ENCODE measurements at regions of chr5 and their contacts with region 1.

Region 1: GRCh38 chr5:171418316-171418981 is 998 bp upstream of the FGF18 start:
- DNase-seq: peak; percentile 82
- ATAC-seq: peak; percentile 89
- H3K4me3 ChIP-seq: peak overlapping the region; percentile 3; the same call in 1 of the 2 replicates
- H3K27ac ChIP-seq: no peak overlapping the region
- H3K4me1 ChIP-seq: peaks cover 2% of the 10 kb centered on the region; the same call in 1 of the 2 replicates
- H3K27me3 ChIP-seq: no peaks in the 10 kb centered on the region; the same call in 1 of the 2 replicates
- CTCF ChIP-seq: peak; percentile 95
- POLR2A ChIP-seq: peak; percentile 39; the same call in 1 of the 2 replicates
- RAD21 ChIP-seq: peak; percentile 95

Region 2: DNA sequence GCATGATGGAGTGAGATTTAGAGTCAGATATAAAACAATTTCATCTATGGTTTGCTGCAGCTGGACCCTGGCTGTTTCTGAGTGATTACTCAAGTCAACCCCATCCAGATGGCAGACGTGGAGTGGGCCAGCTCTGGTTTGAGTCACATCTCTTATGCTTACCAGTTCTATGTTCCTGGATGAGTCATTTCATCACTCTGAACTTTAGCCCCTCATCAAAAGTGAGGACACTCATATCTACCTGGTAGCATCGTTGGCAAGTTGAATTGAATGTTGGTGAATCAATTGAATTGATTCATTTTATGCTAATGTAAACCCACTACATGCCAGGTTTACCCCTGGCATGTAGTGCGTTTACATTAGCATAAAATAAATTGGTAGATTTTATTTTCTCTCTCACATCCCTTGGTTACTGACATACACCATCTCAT is 177.4 kb after region 1 on chr5:
- CTCF ChIA-PET with region 1: interaction called, 7 read pairs
- POLR2A ChIA-PET with region 1: no interaction called
- dilution Hi-C with region 1: no loop called
- in situ Hi-C with region 1: no loop called
- intact Hi-C with region 1: loop called (anchors 10 kb)
- DNase-seq: peak; percentile 92
- ATAC-seq: peak; percentile 41
- H3K4me3 ChIP-seq: no peak overlapping the region
- H3K27ac ChIP-seq: peak overlapping the region; percentile 87
- H3K4me1 ChIP-seq: peaks cover 8% of the 10 kb centered on the region
- H3K27me3 ChIP-seq: peaks cover 2% of the 10 kb centered on the region; the same call in 1 of the 2 replicates
- CTCF ChIP-seq: no peak
- POLR2A ChIP-seq: no peak
- RAD21 ChIP-seq: no peak

Region 3: GRCh38 chr5:171850324-171851285 is 432.2 kb after region 1 on chr5:
- CTCF ChIA-PET with region 1: interaction called, 11 read pairs
- POLR2A ChIA-PET with region 1: no interaction called
- dilution Hi-C with region 1: no loop called
- in situ Hi-C with region 1: no loop called
- intact Hi-C with region 1: loop called (anchors 1 kb)
- DNase-seq: no peak
- ATAC-seq: peak; percentile 51
- H3K4me3 ChIP-seq: no peak overlapping the region
- H3K27ac ChIP-seq: no peak overlapping the region
- H3K4me1 ChIP-seq: no peaks in the 10 kb centered on the region
- H3K27me3 ChIP-seq: no peaks in the 10 kb centered on the region
- CTCF ChIP-seq: 0 out of 2 replicates have a peak, but pooled peaks have one; percentile 16
- POLR2A ChIP-seq: no peak
- RAD21 ChIP-seq: peak; percentile 35

Region 4: GRCh38 chr5:171913987-171914273 is 495.5 kb after region 1 on chr5:
- CTCF ChIA-PET with region 1: interaction called, 13 read pairs
- POLR2A ChIA-PET with region 1: no interaction called
- dilution Hi-C with region 1: no loop called
- in situ Hi-C with region 1: loop called (anchors 5 kb)
- intact Hi-C with region 1: no loop called
- DNase-seq: peak; percentile 21
- ATAC-seq: no peak
- H3K4me3 ChIP-seq: no peak overlapping the region
- H3K27ac ChIP-seq: no peak overlapping the region
- H3K4me1 ChIP-seq: peaks cover 4% of the 10 kb centered on the region
- H3K27me3 ChIP-seq: no peaks in the 10 kb centered on the region
- CTCF ChIP-seq: no peak
- POLR2A ChIP-seq: no peak
- RAD21 ChIP-seq: no peak

Region 5: GRCh38 chr5:172044631-172045314 is 626.3 kb after region 1 on chr5:
- CTCF ChIA-PET with region 1: no interaction called
- POLR2A ChIA-PET with region 1: no interaction called
- dilution Hi-C with region 1: no loop called
- in situ Hi-C with region 1: loop called (anchors 10 kb)
- intact Hi-C with region 1: loop called (anchors 2 kb)
- DNase-seq: no peak
- ATAC-seq: no peak
- H3K4me3 ChIP-seq: no peak overlapping the region
- H3K27ac ChIP-seq: no peak overlapping the region
- H3K4me1 ChIP-seq: no peaks in the 10 kb centered on the region
- H3K27me3 ChIP-seq: no peaks in the 10 kb centered on the region
- CTCF ChIP-seq: no peak
- POLR2A ChIP-seq: no peak
- RAD21 ChIP-seq: no peak

Region 6: DNA sequence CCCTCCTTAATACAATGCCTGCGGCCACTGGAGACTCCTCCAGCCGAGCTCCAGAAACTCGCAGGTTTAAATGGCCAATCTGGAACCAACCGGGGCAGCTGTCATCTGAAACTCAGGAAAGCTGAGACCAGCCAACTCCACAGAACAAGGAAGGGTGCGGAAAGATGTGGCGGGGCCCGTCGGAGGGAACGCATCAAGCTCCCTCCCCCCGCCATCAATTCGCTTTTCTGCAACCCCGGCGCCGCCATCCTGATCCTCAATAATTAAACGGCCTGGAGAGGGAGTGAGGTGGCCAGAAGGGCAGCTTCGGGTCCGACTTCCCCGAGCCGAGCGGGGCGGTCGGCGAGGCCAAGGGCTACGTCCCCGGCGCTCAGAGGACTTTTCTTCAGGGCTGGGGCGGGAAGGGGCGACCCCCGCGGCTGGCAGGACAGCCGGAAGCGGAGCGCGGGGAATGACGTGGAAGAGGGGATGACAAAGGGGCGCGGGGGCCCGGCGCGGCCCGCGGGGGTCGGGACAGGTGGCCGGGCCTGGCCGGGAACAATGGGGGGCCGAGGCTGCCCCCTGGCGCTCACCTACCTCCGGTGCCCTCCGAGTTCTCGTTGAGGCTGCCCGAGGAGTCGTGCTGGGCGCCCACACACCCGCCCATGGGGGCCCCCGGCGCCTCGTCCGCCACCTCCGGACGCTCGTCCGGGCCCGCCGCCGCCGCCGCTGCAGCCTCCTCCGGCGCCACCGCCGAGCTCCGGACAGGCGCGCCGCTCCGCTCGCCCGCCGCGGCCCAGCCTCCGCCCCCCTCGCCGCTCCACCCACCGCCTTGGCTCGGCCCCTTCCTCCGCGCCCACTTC is 864.8 kb after region 1 on chr5 and contains the start of gene UBTD2:
- CTCF ChIA-PET with region 1: no interaction called
- POLR2A ChIA-PET with region 1: no interaction called
- dilution Hi-C with region 1: no loop called
- in situ Hi-C with region 1: loop called (anchors 25 kb)
- intact Hi-C with region 1: no loop called
- DNase-seq: peak; percentile 70
- ATAC-seq: peak; percentile 86
- H3K4me3 ChIP-seq: peak within 1 kb of the TSS; percentile 94
- H3K27ac ChIP-seq: peak within 1 kb of the TSS; percentile 99
- H3K4me1 ChIP-seq: peaks cover 3% of the 10 kb centered on the region
- H3K27me3 ChIP-seq: no peaks in the 10 kb centered on the region
- CTCF ChIP-seq: peak; percentile 45
- POLR2A ChIP-seq: 0 out of 2 replicates have a peak, but pooled peaks have one; percentile 9
- RAD21 ChIP-seq: peak; percentile 38
- total RNA-seq, gene UBTD2: 20.6 and 25.6 TPM in 2 replicates

Region 7: GRCh38 chr5:172764849-172765765 is 1346.7 kb after region 1 on chr5:
- CTCF ChIA-PET with region 1: no interaction called
- POLR2A ChIA-PET with region 1: no interaction called
- dilution Hi-C with region 1: no loop called
- in situ Hi-C with region 1: no loop called
- intact Hi-C with region 1: no loop called
- DNase-seq: peak; percentile 99
- ATAC-seq: peak; percentile 51
- H3K4me3 ChIP-seq: peak overlapping the region; percentile 12
- H3K27ac ChIP-seq: peak overlapping the region; percentile 54
- H3K4me1 ChIP-seq: peaks cover 3% of the 10 kb centered on the region
- H3K27me3 ChIP-seq: no peaks in the 10 kb centered on the region
- CTCF ChIP-seq: no peak
- POLR2A ChIP-seq: no peak
- RAD21 ChIP-seq: no peak